CD8-positive, alpha-beta memory T cell (primary cell): ENCODE measurements at regions of chr9 and their contacts with region 1.

Region 1: GRCh38 chr9:91150998-91151717 is 210.6 kb downstream of the AUH start:
- DNase-seq: peak in 3 of 5 donors; percentile 64 to 83 (median 76)
- H3K4me3 ChIP-seq: peak overlapping the region; percentile 12
- H3K4me3 Mint-ChIP-seq: peak overlapping the region; percentile 3 to 84 (median 71)
- H3K27ac ChIP-seq: no peak overlapping the region
- H3K27ac Mint-ChIP-seq: peak overlapping the region; percentile 48 to 93 (median 78)
- H3K4me1 ChIP-seq: peaks cover 26% of the 10 kb centered on the region
- H3K4me1 Mint-ChIP-seq: peaks cover 49 to 73% (median 61%) of the 10 kb centered on the region in 3 donors
- H3K27me3 ChIP-seq: no peaks in the 10 kb centered on the region
- H3K27me3 Mint-ChIP-seq: no peaks in the 10 kb centered on the region

Region 2: DNA sequence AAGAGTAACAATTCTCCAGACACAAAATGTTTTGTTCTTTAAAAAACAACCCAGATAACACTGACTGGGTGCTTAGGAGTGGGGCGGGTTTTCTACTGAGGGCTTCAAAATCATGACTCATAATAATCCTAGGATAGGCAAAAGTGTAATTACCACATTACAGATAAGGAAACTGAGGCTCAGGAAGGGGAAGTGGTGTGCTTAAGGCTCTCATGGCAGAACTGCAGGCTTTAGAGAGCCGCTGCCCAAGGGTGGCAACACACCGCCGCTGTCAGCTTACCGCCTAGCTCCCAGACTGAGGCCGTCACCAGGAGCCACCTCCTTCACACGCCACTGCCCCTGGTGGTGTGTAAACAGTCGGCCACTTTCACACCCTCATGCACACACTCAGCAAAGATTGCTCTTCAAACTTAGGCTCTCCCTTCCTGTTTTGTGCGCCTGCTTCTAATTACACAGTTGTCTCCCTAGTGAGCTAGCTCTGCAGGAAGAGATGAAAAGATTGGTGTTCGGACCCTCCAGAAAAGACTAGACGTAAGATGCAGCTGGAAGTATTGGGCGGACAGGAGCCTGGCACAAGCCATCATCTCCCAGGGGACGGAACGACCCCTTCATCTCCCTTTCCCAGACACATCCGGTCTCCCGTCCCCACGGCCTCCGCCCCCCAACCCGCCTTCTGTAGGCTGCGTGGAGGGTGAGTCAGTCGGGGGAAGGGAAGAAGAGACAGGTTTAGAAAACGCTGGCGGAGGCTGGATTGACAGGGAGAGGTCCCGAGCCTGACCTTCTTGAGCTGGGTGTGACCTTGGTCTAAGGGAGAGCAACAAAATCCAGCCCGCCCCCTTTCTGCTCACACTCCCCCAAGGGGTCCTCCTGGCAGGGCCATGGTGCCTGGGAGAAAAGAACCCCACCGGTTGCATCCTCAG is 186.8 kb before region 1 on chr9:
- CTCF ChIA-PET with region 1: no interaction called
- POLR2A ChIA-PET with region 1: no interaction called
- DNase-seq: no peak
- H3K4me3 ChIP-seq: no peak overlapping the region
- H3K4me3 Mint-ChIP-seq: peak overlapping the region in 4 of 7 donors; percentile 5 to 20 (median 13)
- H3K27ac ChIP-seq: no peak overlapping the region
- H3K27ac Mint-ChIP-seq: no peak overlapping the region
- H3K4me1 ChIP-seq: no peaks in the 10 kb centered on the region
- H3K4me1 Mint-ChIP-seq: peaks cover 6 to 13% (median 7%) of the 10 kb centered on the region in 3 donors
- H3K27me3 ChIP-seq: peaks cover 10% of the 10 kb centered on the region
- H3K27me3 Mint-ChIP-seq: peaks cover 16 to 68% of the 10 kb centered on the region in 2 donors

Region 3: DNA sequence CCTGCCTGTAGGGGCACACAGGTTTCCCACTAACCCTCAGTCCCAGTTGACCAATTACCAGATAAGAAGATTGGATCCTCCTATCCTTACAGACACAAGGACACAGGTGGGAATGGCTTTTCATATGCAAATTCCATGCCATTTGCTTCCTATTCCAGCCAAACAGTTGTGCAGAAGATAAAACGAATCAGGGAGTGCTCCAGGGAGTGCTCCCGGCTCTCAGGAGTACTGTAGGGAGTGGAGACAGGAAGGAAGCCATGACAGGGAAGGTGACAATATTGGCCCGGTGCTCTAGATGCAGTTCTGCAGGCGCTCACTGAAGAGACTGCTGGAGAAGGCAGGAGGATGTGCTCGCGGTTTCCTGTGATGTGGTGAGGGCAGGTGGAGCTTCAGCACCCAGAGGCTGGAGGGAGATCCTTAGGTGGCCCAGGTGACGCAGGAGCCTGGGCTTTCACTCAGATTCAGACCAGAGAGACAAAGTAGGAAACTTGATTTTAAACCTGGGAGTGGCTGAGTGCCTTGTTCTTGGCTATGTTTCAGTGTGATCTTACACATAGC is 49.5 kb before region 1 on chr9:
- CTCF ChIA-PET with region 1: interaction called, 5 read pairs
- POLR2A ChIA-PET with region 1: interaction called, 10 read pairs
- DNase-seq: peak; percentile 71 to 92 (median 86)
- H3K4me3 ChIP-seq: peak overlapping the region; percentile 11
- H3K4me3 Mint-ChIP-seq: peak overlapping the region; percentile 12 to 74 (median 61)
- H3K27ac ChIP-seq: no peak overlapping the region
- H3K27ac Mint-ChIP-seq: peak overlapping the region; percentile 37 to 94 (median 70)
- H3K4me1 ChIP-seq: peaks cover 35% of the 10 kb centered on the region
- H3K4me1 Mint-ChIP-seq: peaks cover 32 to 40% (median 38%) of the 10 kb centered on the region in 3 donors
- H3K27me3 ChIP-seq: no peaks in the 10 kb centered on the region
- H3K27me3 Mint-ChIP-seq: peaks cover 0 to 5% of the 10 kb centered on the region in 2 donors

Region 4: DNA sequence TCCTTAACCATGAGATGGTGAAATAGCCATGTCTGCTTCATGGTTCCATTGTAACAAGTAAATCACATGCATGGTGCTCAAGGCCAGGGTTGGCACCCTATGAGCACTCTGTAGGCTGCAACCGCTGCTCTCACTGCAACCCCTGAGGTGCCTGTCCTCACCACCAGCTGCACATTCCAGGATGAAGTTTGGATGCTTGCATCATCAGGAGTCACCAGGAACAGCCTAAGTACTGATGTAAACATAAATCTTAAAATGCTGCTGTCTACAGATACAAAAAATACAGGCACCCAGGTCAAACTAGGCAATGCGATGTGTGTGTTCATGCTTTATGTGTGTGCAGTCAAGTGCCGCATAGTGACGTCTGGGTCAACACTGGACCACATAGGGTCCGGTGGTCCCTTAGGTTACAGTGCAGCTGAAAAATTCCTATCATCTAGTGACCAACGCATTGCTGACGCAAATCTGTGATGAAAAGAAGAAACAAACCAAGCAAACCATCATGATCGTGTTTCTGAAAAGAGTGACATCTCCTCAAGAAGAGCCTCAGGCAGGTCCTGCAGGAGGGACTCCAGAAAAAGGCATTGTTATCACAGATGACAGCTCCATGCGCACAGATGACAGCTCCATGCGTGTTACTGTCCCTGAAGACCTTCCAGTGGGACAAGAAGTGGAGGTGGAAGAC is 24.3 kb before region 1 on chr9:
- CTCF ChIA-PET with region 1: no interaction called
- POLR2A ChIA-PET with region 1: no interaction called
- DNase-seq: no peak
- H3K4me3 ChIP-seq: no peak overlapping the region
- H3K4me3 Mint-ChIP-seq: no peak overlapping the region
- H3K27ac ChIP-seq: no peak overlapping the region
- H3K27ac Mint-ChIP-seq: no peak overlapping the region
- H3K4me1 ChIP-seq: peaks cover 7% of the 10 kb centered on the region
- H3K4me1 Mint-ChIP-seq: peaks cover 12 to 23% (median 15%) of the 10 kb centered on the region in 3 donors
- H3K27me3 ChIP-seq: no peaks in the 10 kb centered on the region
- H3K27me3 Mint-ChIP-seq: no peaks in the 10 kb centered on the region

Region 5: GRCh38 chr9:91164724-91165520 is 13.8 kb after region 1 on chr9:
- CTCF ChIA-PET with region 1: no interaction called
- POLR2A ChIA-PET with region 1: interaction called, 10 read pairs
- DNase-seq: peak; percentile 13 to 82 (median 47)
- H3K4me3 ChIP-seq: no peak overlapping the region
- H3K4me3 Mint-ChIP-seq: peak overlapping the region; percentile 35 to 91 (median 72)
- H3K27ac ChIP-seq: peak overlapping the region; percentile 57
- H3K27ac Mint-ChIP-seq: peak overlapping the region; percentile 55 to 86 (median 76)
- H3K4me1 ChIP-seq: peaks cover 41% of the 10 kb centered on the region
- H3K4me1 Mint-ChIP-seq: peaks cover 44 to 61% (median 48%) of the 10 kb centered on the region in 3 donors
- H3K27me3 ChIP-seq: no peaks in the 10 kb centered on the region
- H3K27me3 Mint-ChIP-seq: no peaks in the 10 kb centered on the region